A673 (cell line): ENCODE measurements at regions of chr17 and their contacts with region 1.

Region 1: GRCh38 chr17:7687908-7688807 is at the start of gene WRAP53:
- DNase-seq: peak; percentile 100
- H3K4me3 ChIP-seq: peak within 1 kb of the TSS; percentile 91
- H3K27ac ChIP-seq: peak within 1 kb of the TSS; percentile 99
- H3K4me1 ChIP-seq: peaks cover 20% of the 10 kb centered on the region
- H3K27me3 ChIP-seq: no peaks in the 10 kb centered on the region
- CTCF ChIP-seq: peak; percentile 100
- total RNA-seq, gene WRAP53: 42.2 and 51.8 TPM in 2 replicates

Region 2: GRCh38 chr17:7242717-7243576 is 445.2 kb before region 1 on chr17:
- CTCF ChIA-PET with region 1: no interaction called
- POLR2A ChIA-PET with region 1: interaction called, 10 read pairs
- intact Hi-C with region 1: no loop called
- DNase-seq: peak; percentile 97
- H3K4me3 ChIP-seq: peak overlapping the region; percentile 72
- H3K27ac ChIP-seq: peak overlapping the region; percentile 84
- H3K4me1 ChIP-seq: peaks cover 23% of the 10 kb centered on the region
- H3K27me3 ChIP-seq: no peaks in the 10 kb centered on the region
- CTCF ChIP-seq: no peak

Region 3: GRCh38 chr17:7513850-7514419 is 174.2 kb before region 1 on chr17:
- CTCF ChIA-PET with region 1: no interaction called
- POLR2A ChIA-PET with region 1: interaction called, 14 read pairs
- intact Hi-C with region 1: no loop called
- DNase-seq: no peak
- H3K4me3 ChIP-seq: no peak overlapping the region
- H3K27ac ChIP-seq: no peak overlapping the region
- H3K4me1 ChIP-seq: peaks cover 6% of the 10 kb centered on the region
- H3K27me3 ChIP-seq: no peaks in the 10 kb centered on the region
- CTCF ChIP-seq: no peak

Region 4: GRCh38 chr17:7614422-7615264 is 73.5 kb before region 1 on chr17 and contains the start of gene FXR2:
- CTCF ChIA-PET with region 1: interaction called, 18 read pairs
- POLR2A ChIA-PET with region 1: interaction called, 3 read pairs
- intact Hi-C with region 1: no loop called
- DNase-seq: peak; percentile 100
- H3K4me3 ChIP-seq: peak within 1 kb of the TSS; percentile 92
- H3K27ac ChIP-seq: peak within 1 kb of the TSS; percentile 91
- H3K4me1 ChIP-seq: peaks cover 20% of the 10 kb centered on the region
- H3K27me3 ChIP-seq: no peaks in the 10 kb centered on the region
- CTCF ChIP-seq: peak; percentile 65
- total RNA-seq, gene FXR2: 101 TPM in 2 replicates

Region 5: GRCh38 chr17:7856883-7857723 is 168.9 kb after region 1 on chr17 and contains the start of gene NAA38:
- CTCF ChIA-PET with region 1: no interaction called
- POLR2A ChIA-PET with region 1: no interaction called
- intact Hi-C with region 1: loop called (anchors 1 kb)
- DNase-seq: peak; percentile 100
- H3K4me3 ChIP-seq: peak within 1 kb of the TSS; percentile 65
- H3K27ac ChIP-seq: peak within 1 kb of the TSS; percentile 93
- H3K4me1 ChIP-seq: peaks cover 18% of the 10 kb centered on the region
- H3K27me3 ChIP-seq: no peaks in the 10 kb centered on the region
- CTCF ChIP-seq: peak; percentile 53
- total RNA-seq, gene NAA38: 64.3 and 67.7 TPM in 2 replicates